ENCODE measurements at regions of chr12 and their contacts with region 1.

Region 1: DNA sequence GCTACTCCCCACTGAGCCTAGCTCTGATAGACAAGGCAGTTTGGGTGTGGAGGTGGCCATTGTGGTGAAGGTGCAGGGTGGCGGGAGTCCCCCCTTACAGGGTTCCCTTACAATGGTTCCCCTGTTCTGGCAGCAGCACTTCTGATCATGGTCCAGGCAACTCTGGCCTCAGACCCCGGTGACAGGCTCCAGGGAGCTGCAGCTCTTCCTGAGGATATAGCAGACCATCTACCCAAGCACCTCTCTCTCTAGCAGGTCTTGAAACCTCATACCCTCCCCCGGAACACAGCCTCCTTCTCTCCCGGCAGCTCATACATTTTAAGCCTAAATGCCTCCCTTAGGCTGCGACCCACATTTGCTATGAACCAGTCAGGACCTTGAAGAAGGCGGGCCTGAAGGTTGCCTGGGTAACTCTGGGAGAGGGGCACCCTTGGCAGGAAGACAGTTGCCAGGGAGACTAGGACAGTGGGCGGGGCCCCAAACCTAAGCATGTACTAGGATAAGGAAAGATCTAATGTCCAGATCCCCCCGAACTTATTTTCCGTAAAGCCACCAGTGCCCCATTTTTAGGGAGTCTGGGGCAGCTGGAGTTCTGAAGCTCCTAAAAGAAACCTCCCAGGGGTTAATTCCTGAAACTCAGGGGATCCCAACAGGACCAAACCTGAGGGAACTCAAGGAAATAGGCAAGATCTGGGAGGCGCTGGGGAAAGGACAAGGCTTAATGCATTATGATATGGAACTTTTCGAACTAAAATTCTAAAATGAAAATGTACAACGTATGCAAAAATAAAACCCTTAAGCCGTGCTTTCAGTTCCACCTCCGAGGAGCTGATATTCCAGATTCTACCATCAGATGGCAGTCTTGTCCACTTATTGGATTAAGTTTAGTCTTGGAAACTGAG is 4.5 kb upstream of the GDF11 start:
- DNase-seq: peak; percentile 51 to 91 (median 74)
- ATAC-seq: peak; percentile 73
- H3K4me3 ChIP-seq: peak overlapping the region; percentile 75
- H3K4me3 Mint-ChIP-seq: peak overlapping the region; percentile 93
- H3K27ac ChIP-seq: peak overlapping the region; percentile 79 to 83
- H3K27ac Mint-ChIP-seq: peak overlapping the region; percentile 89
- H3K4me1 ChIP-seq: peaks cover 33% of the 10 kb centered on the region
- H3K4me1 Mint-ChIP-seq: peaks cover 40% of the 10 kb centered on the region
- H3K27me3 ChIP-seq: no peaks in the 10 kb centered on the region
- H3K27me3 Mint-ChIP-seq: no peaks in the 10 kb centered on the region
- CTCF ChIP-seq: peak; percentile 88

Region 2: DNA sequence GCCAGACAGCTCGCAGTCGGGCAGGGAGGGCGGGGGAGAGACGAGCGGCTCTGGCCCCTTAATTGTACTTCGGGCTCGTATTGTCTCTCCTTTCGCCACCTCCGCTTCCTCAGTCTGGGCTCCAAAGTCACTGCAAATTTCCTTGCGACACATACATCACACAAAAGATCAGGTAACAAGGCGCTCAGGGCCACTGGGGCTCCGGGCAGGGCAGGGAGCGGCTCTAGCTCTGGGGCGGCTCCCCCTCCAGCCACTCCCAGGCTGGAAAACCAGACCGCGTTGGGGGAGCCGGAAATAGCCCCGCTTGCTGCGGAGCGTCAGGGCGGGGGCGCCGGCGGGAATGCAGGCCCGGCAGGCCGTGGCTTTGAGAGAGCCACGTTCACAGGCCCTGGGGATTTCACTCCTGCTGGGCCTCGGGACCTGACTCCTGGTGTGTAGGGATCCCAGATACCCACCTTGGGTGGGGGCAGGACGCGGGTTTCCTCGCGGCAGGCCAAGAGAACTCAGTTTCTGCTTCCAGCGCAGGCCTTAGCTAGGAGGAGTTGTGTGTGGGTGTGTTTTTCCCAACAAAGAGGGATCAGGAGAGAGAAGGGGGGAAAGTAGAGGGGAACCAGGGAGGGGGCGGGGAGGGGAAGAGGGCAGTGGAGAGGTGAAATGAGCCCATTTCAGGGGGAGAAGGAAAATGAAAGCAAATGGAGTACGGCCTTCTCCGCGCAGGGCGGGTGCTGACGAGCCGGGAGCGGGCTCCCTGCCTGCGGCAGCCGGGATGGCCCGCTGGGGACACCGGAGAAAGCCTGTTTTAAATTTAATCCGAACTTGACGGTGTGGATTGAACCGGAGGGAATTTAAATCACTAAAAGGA is 1742.8 kb before region 1 on chr12:
- CTCF ChIA-PET with region 1: no interaction called
- POLR2A ChIA-PET with region 1: no interaction called
- intact Hi-C with region 1: no loop called
- DNase-seq: peak in 3 of 14 experiments; percentile 36 to 54 (median 48)
- ATAC-seq: peak; percentile 50
- H3K4me3 ChIP-seq: peak overlapping the region; percentile 58
- H3K4me3 Mint-ChIP-seq: peak overlapping the region; percentile 88
- H3K27ac ChIP-seq: no peak overlapping the region
- H3K27ac Mint-ChIP-seq: no peak overlapping the region
- H3K4me1 ChIP-seq: peaks cover 60% of the 10 kb centered on the region
- H3K4me1 Mint-ChIP-seq: peaks cover 61% of the 10 kb centered on the region
- H3K27me3 ChIP-seq: peaks cover 97 to 99% of the 10 kb centered on the region in 2 experiments
- H3K27me3 Mint-ChIP-seq: peaks cover 100% of the 10 kb centered on the region
- CTCF ChIP-seq: no peak

Region 3: GRCh38 chr12:55428331-55429243 is 309.8 kb before region 1 on chr12:
- CTCF ChIA-PET with region 1: no interaction called
- POLR2A ChIA-PET with region 1: no interaction called
- intact Hi-C with region 1: no loop called
- DNase-seq: no peak
- ATAC-seq: no peak
- H3K4me3 ChIP-seq: no peak overlapping the region
- H3K4me3 Mint-ChIP-seq: no peak overlapping the region
- H3K27ac ChIP-seq: no peak overlapping the region
- H3K27ac Mint-ChIP-seq: no peak overlapping the region
- H3K4me1 ChIP-seq: no peaks in the 10 kb centered on the region
- H3K4me1 Mint-ChIP-seq: no peaks in the 10 kb centered on the region
- H3K27me3 ChIP-seq: no peaks in the 10 kb centered on the region
- H3K27me3 Mint-ChIP-seq: peaks cover 49% of the 10 kb centered on the region
- CTCF ChIP-seq: no peak

Region 4: DNA sequence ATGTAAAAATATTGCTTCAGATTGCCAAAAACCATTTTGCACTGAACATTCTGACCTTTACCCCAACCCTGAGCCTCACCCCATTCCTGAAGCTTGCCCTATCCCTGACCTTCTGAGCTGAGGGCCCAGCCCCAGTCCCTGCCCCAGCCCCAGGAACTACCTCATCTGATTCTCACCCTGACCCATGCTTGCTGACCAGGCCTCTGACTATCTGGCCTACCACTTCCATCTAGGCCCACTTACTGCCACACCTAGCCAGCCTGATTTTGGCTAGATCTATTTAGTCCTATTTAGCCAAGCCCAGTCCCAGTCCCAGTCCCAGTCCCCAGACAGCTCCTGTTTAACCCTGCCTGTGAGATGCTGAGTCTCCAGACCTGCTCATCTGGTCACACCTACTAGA is 68.1 kb before region 1 on chr12:
- CTCF ChIA-PET with region 1: no interaction called
- POLR2A ChIA-PET with region 1: no interaction called
- intact Hi-C with region 1: no loop called
- DNase-seq: no peak
- ATAC-seq: no peak
- H3K4me3 ChIP-seq: no peak overlapping the region
- H3K4me3 Mint-ChIP-seq: no peak overlapping the region
- H3K27ac ChIP-seq: no peak overlapping the region
- H3K27ac Mint-ChIP-seq: no peak overlapping the region
- H3K4me1 ChIP-seq: no peaks in the 10 kb centered on the region
- H3K4me1 Mint-ChIP-seq: no peaks in the 10 kb centered on the region
- H3K27me3 ChIP-seq: no peaks in the 10 kb centered on the region
- H3K27me3 Mint-ChIP-seq: peaks cover 16% of the 10 kb centered on the region
- CTCF ChIP-seq: no peak

Region 5: GRCh38 chr12:55715833-55716581 is 22.4 kb before region 1 on chr12 and contains the start of gene BLOC1S1:
- CTCF ChIA-PET with region 1: interaction called, 9 read pairs
- POLR2A ChIA-PET with region 1: interaction called, 20 read pairs
- intact Hi-C with region 1: no loop called
- DNase-seq: peak; percentile 86 to 96 (median 90)
- ATAC-seq: peak; percentile 97
- H3K4me3 ChIP-seq: peak within 1 kb of the TSS; percentile 75
- H3K4me3 Mint-ChIP-seq: peak within 1 kb of the TSS; percentile 96
- H3K27ac ChIP-seq: peak within 1 kb of the TSS; percentile 93 to 94
- H3K27ac Mint-ChIP-seq: peak within 1 kb of the TSS; percentile 92
- H3K4me1 ChIP-seq: peaks cover 43% of the 10 kb centered on the region
- H3K4me1 Mint-ChIP-seq: peaks cover 34% of the 10 kb centered on the region
- H3K27me3 ChIP-seq: no peaks in the 10 kb centered on the region
- H3K27me3 Mint-ChIP-seq: peaks cover 4% of the 10 kb centered on the region
- CTCF ChIP-seq: no peak
- total RNA-seq, gene BLOC1S1: 34.8 to 36.9 TPM

Region 6: DNA sequence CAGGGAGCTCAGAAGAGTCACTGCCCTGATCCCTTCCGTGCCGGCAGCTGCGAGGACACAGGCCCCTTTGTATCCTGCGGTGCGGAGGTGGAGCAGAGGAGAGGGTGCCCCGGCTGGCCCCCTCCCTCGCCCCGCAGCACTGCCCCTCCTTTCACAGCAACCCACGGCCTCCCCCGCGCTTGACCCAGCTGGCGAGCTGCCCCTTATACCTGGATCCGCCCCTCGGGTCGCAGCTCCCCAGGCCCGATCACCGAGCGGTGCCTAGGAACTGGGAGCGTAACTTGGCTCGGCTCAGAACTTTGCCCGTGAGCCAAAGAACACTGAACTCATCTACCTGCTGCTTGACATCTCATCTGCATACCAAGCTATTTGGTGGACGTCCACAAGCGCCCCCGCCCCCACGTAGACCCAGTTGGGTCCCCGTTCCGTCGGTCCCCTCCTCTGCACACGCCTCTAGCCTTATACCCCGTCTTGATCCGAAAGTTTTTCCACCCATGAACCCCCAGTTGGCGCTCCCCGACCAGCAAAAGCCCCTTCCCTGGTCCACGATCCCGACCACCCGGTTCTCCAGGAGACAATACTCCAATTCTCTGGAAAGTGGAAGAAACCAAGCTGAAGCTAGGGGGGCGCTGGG is 91.7 kb after region 1 on chr12:
- CTCF ChIA-PET with region 1: interaction called, 6 read pairs
- POLR2A ChIA-PET with region 1: interaction called, 15 read pairs
- intact Hi-C with region 1: no loop called
- DNase-seq: peak in 11 of 14 experiments; percentile 4 to 54 (median 21)
- ATAC-seq: peak; percentile 23
- H3K4me3 ChIP-seq: peak overlapping the region; percentile 98
- H3K4me3 Mint-ChIP-seq: peak overlapping the region; percentile 100
- H3K27ac ChIP-seq: peak overlapping the region; percentile 52 to 70
- H3K27ac Mint-ChIP-seq: peak overlapping the region; percentile 88
- H3K4me1 ChIP-seq: peaks cover 58% of the 10 kb centered on the region
- H3K4me1 Mint-ChIP-seq: peaks cover 61% of the 10 kb centered on the region
- H3K27me3 ChIP-seq: no peaks in the 10 kb centered on the region
- H3K27me3 Mint-ChIP-seq: no peaks in the 10 kb centered on the region
- CTCF ChIP-seq: no peak

Region 7: DNA sequence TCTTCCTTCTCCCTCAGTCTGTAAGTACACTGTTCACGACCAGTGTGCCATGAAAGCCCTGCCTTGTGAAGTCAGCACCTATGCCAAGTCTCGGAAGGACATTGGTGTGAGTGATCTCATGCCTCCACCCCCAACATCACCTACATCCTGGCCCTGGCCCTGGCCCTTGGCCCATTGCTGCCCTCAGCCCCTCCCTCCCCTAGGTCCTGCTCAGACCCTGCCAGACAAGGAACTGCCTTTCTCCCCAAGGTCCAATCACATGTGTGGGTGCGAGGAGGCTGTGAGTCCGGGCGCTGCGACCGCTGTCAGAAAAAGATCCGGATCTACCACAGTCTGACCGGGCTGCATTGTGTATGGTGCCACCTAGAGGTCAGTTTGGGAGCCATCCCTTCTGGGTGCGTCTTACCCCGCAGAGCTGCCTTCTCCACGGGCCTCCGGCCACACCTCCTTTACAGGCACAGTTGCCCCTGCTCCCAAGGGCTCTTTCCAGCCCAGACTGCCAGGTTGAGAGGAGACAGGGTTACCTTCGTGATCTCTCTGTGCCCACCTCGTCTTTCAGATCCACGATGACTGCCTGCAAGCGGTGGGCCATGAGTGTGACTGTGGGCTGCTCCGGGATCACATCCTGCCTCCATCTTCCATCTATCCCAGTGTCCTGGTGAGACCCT is 201.8 kb after region 1 on chr12:
- CTCF ChIA-PET with region 1: interaction called, 31 read pairs
- POLR2A ChIA-PET with region 1: interaction called, 18 read pairs
- intact Hi-C with region 1: loop called (anchors 1 to 2 kb)
- DNase-seq: peak; percentile 76 to 92 (median 82)
- ATAC-seq: peak; percentile 88
- H3K4me3 ChIP-seq: no peak overlapping the region
- H3K4me3 Mint-ChIP-seq: peak overlapping the region; percentile 72
- H3K27ac ChIP-seq: peak overlapping the region; percentile 42 to 70
- H3K27ac Mint-ChIP-seq: peak overlapping the region; percentile 97
- H3K4me1 ChIP-seq: peaks cover 78% of the 10 kb centered on the region
- H3K4me1 Mint-ChIP-seq: peaks cover 79% of the 10 kb centered on the region
- H3K27me3 ChIP-seq: no peaks in the 10 kb centered on the region
- H3K27me3 Mint-ChIP-seq: no peaks in the 10 kb centered on the region
- CTCF ChIP-seq: peak; percentile 92

Region 8: GRCh38 chr12:56029666-56030293 is 291.4 kb after region 1 on chr12:
- CTCF ChIA-PET with region 1: interaction called, 5 read pairs
- POLR2A ChIA-PET with region 1: no interaction called
- intact Hi-C with region 1: loop called in 1 of 2 experiments (anchors 2 kb)
- DNase-seq: peak in 12 of 14 experiments; percentile 19 to 72 (median 38)
- ATAC-seq: peak; percentile 56
- H3K4me3 ChIP-seq: no peak overlapping the region
- H3K4me3 Mint-ChIP-seq: no peak overlapping the region
- H3K27ac ChIP-seq: no peak overlapping the region
- H3K27ac Mint-ChIP-seq: peak overlapping the region; percentile 78
- H3K4me1 ChIP-seq: peaks cover 23% of the 10 kb centered on the region
- H3K4me1 Mint-ChIP-seq: peaks cover 27% of the 10 kb centered on the region
- H3K27me3 ChIP-seq: no peaks in the 10 kb centered on the region
- H3K27me3 Mint-ChIP-seq: no peaks in the 10 kb centered on the region
- CTCF ChIP-seq: peak; percentile 69

Region 9: GRCh38 chr12:56127888-56128669 is 389.7 kb after region 1 on chr12 and contains the start of gene ESYT1:
- CTCF ChIA-PET with region 1: interaction called, 5 read pairs
- POLR2A ChIA-PET with region 1: interaction called, 4 read pairs
- intact Hi-C with region 1: loop called in 1 of 2 experiments (anchors 5 kb)
- DNase-seq: peak; percentile 93 to 100 (median 96)
- ATAC-seq: peak; percentile 90
- H3K4me3 ChIP-seq: peak within 1 kb of the TSS; percentile 99
- H3K4me3 Mint-ChIP-seq: peak within 1 kb of the TSS; percentile 97
- H3K27ac ChIP-seq: peak within 1 kb of the TSS; percentile 77
- H3K27ac Mint-ChIP-seq: peak within 1 kb of the TSS; percentile 86
- H3K4me1 ChIP-seq: peaks cover 66% of the 10 kb centered on the region
- H3K4me1 Mint-ChIP-seq: peaks cover 69% of the 10 kb centered on the region
- H3K27me3 ChIP-seq: no peaks in the 10 kb centered on the region
- H3K27me3 Mint-ChIP-seq: no peaks in the 10 kb centered on the region
- CTCF ChIP-seq: no peak
- total RNA-seq, gene ESYT1: 88.5 to 90.3 TPM

Region 10: GRCh38 chr12:56468216-56469006 is 730.0 kb after region 1 on chr12 and contains the start of gene SPRYD4:
- CTCF ChIA-PET with region 1: no interaction called
- POLR2A ChIA-PET with region 1: no interaction called
- intact Hi-C with region 1: loop called in 1 of 2 experiments (anchors 10 kb)
- DNase-seq: peak; percentile 88 to 98 (median 93)
- ATAC-seq: peak; percentile 90
- H3K4me3 ChIP-seq: peak within 1 kb of the TSS; percentile 87
- H3K4me3 Mint-ChIP-seq: peak within 1 kb of the TSS; percentile 96
- H3K27ac ChIP-seq: peak within 1 kb of the TSS; percentile 68 to 94
- H3K27ac Mint-ChIP-seq: peak within 1 kb of the TSS; percentile 97
- H3K4me1 ChIP-seq: peaks cover 29% of the 10 kb centered on the region
- H3K4me1 Mint-ChIP-seq: peaks cover 31% of the 10 kb centered on the region
- H3K27me3 ChIP-seq: no peaks in the 10 kb centered on the region
- H3K27me3 Mint-ChIP-seq: no peaks in the 10 kb centered on the region
- CTCF ChIP-seq: peak; percentile 34
- total RNA-seq, gene SPRYD4: 7.4 to 7.9 TPM